Cardiac septum (tissue), 1 donor: ENCODE measurements at regions of chr2 and their contacts with region 1.

Region 1: DNA sequence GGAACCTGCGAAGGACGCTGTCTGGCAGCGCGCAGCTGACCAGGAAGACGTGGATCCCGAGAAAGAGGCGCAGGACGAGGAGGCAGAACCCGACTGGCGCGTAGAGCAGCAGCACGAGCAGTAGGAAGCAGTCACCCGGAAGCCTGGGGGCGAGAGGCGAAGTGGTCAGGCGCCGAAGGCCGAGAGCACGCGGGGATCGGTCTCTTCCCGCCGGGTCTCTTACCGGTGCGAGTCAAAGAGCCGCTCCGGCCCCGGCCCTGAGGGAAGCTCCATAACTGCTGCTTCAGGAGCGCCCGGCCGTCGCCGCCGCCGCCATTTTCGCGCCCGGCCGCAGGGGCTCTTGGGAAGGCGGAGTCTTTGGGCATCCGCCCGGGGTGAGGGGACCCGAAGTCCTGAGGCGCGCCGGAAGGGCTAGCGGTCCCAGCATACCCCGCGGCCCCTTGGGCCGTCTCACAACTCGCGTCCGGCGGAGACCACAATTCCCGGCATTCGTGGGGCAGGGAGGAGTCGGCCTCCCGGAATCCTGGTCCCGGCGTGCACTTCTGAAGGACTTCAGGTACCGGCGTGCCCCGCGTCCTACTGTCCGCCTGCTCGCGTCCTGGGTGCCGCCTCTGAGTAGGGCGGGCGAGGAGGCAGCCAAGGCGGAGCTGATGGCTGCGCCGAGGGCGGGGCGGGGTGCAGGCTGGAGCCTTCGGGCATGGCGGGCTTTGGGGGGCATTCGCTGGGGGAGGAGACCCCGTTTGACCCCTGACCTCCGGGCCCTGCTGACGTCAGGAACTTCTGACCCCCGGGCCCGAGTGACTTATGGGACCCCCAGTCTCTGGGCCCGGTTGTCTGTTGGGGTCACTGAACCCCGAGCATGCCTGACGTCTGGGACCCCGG is at the starts of genes AUP1 and HTRA2:
- DNase-seq: peak; percentile 99
- total RNA-seq, gene AUP1: 50.0 TPM
- total RNA-seq, gene HTRA2: 25.0 TPM

Region 2: DNA sequence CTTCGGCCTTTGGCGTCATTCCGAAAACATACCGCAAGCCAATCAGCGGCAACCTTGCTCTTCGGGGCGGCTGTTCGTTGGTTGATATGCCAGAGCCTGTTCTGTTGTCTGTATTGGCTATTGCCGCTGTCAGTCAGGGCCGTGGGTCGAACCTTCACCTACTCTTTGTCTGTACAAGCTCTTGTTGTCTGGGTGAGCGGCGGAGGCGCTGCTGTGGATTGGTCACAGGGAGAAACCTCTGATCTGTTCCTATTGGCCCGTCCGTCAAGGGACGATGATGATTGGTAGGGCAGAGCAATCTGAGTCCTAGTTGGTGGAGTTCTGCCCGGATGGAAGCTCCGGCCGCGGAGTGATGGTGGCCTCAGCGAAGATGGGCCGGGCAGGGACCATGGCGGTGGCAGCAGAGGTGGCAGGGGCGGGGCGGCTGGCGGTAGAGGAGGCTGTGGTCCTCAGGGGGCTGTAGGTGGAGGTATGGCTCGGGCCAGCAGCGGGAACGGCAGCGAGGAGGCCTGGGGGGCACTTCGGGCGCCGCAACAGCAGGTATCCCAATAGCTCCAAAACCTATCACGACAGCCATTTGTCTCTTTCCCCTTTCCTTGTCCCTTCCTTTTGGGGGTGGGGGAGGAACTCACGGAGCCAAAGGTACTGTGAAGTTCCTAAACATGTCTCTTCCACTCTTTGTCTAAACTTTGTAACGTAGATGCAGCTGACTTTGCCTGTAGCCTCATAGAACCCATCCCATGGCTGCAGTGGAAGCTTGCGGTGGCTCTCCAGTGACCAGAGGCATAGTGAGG is 71.3 kb before region 1 on chr2 and contains the start of gene WBP1:
- intact Hi-C with region 1: loop called (anchors 1 kb)
- DNase-seq: peak; percentile 100
- total RNA-seq, gene WBP1: 47.7 TPM

Region 3: GRCh38 chr2:74507145-74507925 is 22.3 kb before region 1 on chr2 and contains the start of gene PCGF1:
- intact Hi-C with region 1: loop called (anchors 1 kb)
- DNase-seq: peak; percentile 99
- total RNA-seq, gene PCGF1: 11.4 TPM

Region 4: DNA sequence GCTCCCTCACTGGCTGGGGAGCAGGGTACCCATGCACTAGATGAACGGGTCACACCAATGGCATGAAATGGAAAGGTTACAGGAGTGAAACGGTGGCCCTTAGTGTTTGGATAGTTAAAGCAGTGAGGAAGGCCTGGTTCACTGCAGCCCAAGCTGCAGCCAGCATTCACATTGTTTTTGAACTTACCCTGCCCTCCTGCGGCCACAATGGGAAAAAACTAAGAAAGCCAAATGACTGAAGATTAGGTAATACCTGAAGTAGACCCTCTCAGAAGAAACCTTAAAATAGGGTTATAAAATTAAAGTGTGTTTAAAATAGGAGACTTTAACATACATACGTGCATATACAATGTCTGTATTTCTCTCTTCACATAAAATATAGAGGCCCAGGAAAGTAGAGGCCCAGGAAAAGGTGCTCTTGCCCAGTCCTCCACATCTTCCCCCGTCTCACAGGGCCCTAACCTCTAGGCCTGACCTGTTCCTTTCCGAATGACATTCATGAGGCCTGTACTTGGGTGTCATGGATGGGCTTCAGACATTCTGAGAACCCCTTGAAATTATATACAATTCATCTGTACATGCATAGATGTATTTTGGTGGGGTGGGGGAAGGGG is 58.2 kb after region 1 on chr2:
- intact Hi-C with region 1: loop called (anchors 5 kb)
- DNase-seq: peak; percentile 78